Naive thymus-derived CD4-positive, alpha-beta T cell (primary cell): ENCODE measurements at regions of chr1 and their contacts with region 1.

Region 1: GRCh38 chr1:3856908-3857790 is at the starts of genes CEP104 and DFFB:
- DNase-seq: peak; percentile 98 to 99 (median 98)
- ATAC-seq: peak; percentile 98
- H3K4me3 ChIP-seq: peak within 1 kb of the TSS; percentile 98
- H3K4me3 Mint-ChIP-seq: peak within 1 kb of the TSS; percentile 93 to 99 (median 98)
- H3K27ac ChIP-seq: peak within 1 kb of the TSS; percentile 79
- H3K27ac Mint-ChIP-seq: peak within 1 kb of the TSS; percentile 88 to 97 (median 94)
- H3K4me1 ChIP-seq: peaks cover 17 to 25% of the 10 kb centered on the region in 2 donors
- H3K4me1 Mint-ChIP-seq: peaks cover 15 to 58% (median 41%) of the 10 kb centered on the region in 7 donors
- H3K27me3 ChIP-seq: no peaks in the 10 kb centered on the region
- H3K27me3 Mint-ChIP-seq: no peaks in the 10 kb centered on the region
- total RNA-seq, gene CEP104: 33.7 to 68.0 (median 45.6) TPM
- total RNA-seq, gene DFFB: 13.6 to 27.7 (median 19.2) TPM

Region 2: GRCh38 chr1:3900119-3900968 is 43.2 kb after region 1 on chr1 and contains the start of gene C1orf174:
- CTCF ChIA-PET with region 1: interaction called, 6 read pairs
- POLR2A ChIA-PET with region 1: interaction called, 30 read pairs
- intact Hi-C with region 1: loop called (anchors 1 kb)
- DNase-seq: peak; percentile 78 to 99 (median 96)
- ATAC-seq: peak; percentile 88
- H3K4me3 ChIP-seq: peak within 1 kb of the TSS; percentile 79
- H3K4me3 Mint-ChIP-seq: peak within 1 kb of the TSS; percentile 90 to 96 (median 94)
- H3K27ac ChIP-seq: peak within 1 kb of the TSS; percentile 94
- H3K27ac Mint-ChIP-seq: peak within 1 kb of the TSS; percentile 92 to 99 (median 96)
- H3K4me1 ChIP-seq: peaks cover 6 to 39% of the 10 kb centered on the region in 2 donors
- H3K4me1 Mint-ChIP-seq: peaks cover 23 to 71% (median 53%) of the 10 kb centered on the region in 7 donors
- H3K27me3 ChIP-seq: no peaks in the 10 kb centered on the region
- H3K27me3 Mint-ChIP-seq: no peaks in the 10 kb centered on the region
- total RNA-seq, gene C1orf174: 17.0 to 33.6 (median 27.1) TPM